Sciatic nerve (tissue), 2 donors: ENCODE measurements at regions of chr1 and their contacts with region 1.

Region 1: GRCh38 chr1:24385160-24385940 is 28.2 kb downstream of the STPG1 start:
- DNase-seq: no peak
- ATAC-seq: no peak

Region 2: GRCh38 chr1:23664837-23665795 is 720.2 kb before region 1 on chr1:
- intact Hi-C with region 1: loop called (anchors 10 kb)
- DNase-seq: no peak
- ATAC-seq: peak; percentile 56

Region 3: GRCh38 chr1:24244519-24245268 is 140.7 kb before region 1 on chr1:
- intact Hi-C with region 1: no loop called
- DNase-seq: no peak
- ATAC-seq: no peak

Region 4: DNA sequence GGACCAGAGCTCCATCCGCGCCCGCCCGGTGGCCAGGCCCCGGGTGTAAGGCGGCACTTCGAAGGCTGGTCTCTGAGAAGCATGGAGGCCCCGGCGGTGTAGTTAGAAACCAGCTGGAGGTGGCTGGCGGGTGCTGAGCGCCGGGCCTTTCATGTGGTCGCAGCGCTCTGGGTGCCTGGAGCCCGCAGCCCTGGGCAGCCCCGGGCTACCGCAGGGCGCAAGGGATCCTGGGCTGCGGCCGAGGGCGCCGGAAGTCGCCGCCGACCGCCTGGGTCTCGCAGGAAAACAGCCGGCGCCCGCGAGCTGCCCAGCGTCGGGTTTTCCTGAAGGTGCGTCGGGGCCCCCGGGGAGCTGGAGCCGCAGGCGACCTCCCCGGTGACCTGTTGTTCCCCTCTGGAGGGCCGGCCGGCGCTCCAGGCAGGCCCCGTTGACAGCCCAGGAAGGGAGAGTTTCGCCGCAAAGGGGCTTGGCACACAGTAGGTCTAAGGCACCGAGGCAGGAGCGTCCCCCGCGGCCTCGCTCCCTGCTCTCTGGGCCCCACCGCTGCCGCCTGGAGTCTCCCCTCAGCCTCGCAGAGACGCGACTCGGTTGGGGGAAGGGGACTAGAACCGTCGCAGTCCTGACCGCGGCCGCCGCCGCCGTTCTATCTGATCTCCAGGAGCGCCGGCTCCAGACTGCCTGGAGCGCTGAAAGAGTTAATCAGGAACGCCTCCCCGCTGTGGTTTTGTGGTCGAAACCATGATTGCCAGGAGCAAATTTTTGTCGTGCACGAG is 63.5 kb before region 1 on chr1:
- intact Hi-C with region 1: no loop called
- DNase-seq: peak; percentile 71
- ATAC-seq: peak; percentile 70

Region 5: GRCh38 chr1:24331961-24332673 is 53.2 kb before region 1 on chr1:
- intact Hi-C with region 1: no loop called
- DNase-seq: no peak
- ATAC-seq: no peak

Region 6: GRCh38 chr1:24463776-24464735 is 78.7 kb after region 1 on chr1:
- intact Hi-C with region 1: no loop called
- DNase-seq: no peak
- ATAC-seq: no peak